HCT116 (cell line): ENCODE measurements at regions of chr10 and their contacts with region 1.

Region 1: GRCh38 chr10:99966306-99966705 is 43.4 kb downstream of the DNMBP start:
- DNase-seq: peak; percentile 89
- ATAC-seq: peak; percentile 83
- H3K4me3 ChIP-seq: peak overlapping the region in 1 of 2 experiments; percentile 13; a peak in 2 of 4 replicates
- H3K27ac ChIP-seq: peak overlapping the region; percentile 98
- H3K4me1 ChIP-seq: peaks cover 66 to 79% of the 10 kb centered on the region in 2 experiments
- H3K27me3 ChIP-seq: no peaks in the 10 kb centered on the region
- CTCF ChIP-seq: no peak
- POLR2A ChIP-seq: no peak
- RAD21 ChIP-seq: peak; percentile 39

Region 2: GRCh38 chr10:99854860-99855259 is 111.4 kb before region 1 on chr10:
- CTCF ChIA-PET with region 1: interaction called, 5 read pairs
- POLR2A ChIA-PET with region 1: no interaction called
- RAD21 ChIA-PET with region 1: no interaction called
- intact Hi-C with region 1: loop called (anchors 5 kb)
- DNase-seq: peak; percentile 51
- ATAC-seq: peak; percentile 63
- H3K4me3 ChIP-seq: no peak overlapping the region
- H3K27ac ChIP-seq: no peak overlapping the region
- H3K4me1 ChIP-seq: peaks cover 3 to 7% of the 10 kb centered on the region in 2 experiments; a peak in 2 of 4 replicates
- H3K27me3 ChIP-seq: no peaks in the 10 kb centered on the region
- CTCF ChIP-seq: peak; percentile 60 to 81 (median 71)
- POLR2A ChIP-seq: no peak
- RAD21 ChIP-seq: peak; percentile 94